ENCODE measurements at regions of chr11 and their contacts with region 1.

Region 1: DNA sequence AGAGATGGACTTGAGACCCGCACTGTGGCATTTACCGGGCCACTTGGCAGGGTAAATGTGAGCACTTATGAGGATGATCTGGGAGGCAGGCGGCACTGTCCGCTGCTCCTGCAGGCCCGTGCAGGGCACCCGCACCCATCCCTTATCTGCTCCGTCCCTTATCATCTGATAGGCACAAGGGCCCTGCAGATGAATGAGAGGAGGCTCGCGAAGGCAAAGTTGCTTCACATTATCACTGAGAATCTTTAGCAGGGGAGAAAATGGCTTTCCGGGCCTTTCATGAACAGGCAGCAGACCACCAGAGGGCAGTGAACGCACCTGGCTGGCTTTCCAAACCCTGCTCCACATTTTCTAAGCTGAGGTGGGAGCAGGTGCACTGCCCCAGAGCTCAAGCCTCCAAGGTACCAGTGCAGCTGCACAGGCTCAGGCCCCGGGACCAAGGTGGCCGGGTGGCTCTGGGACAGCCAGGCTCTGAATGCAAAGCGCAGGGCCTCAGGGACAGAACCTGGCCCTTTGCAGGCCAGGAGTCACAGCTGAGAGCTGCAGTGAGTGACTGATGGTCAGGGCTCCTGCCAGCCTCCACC is 165.6 kb downstream of the SHANK2 start:
- DNase-seq: peak; percentile 42
- H3K4me3 Mint-ChIP-seq: no peak overlapping the region
- H3K27ac Mint-ChIP-seq: no peak overlapping the region
- H3K4me1 Mint-ChIP-seq: no peaks in the 10 kb centered on the region
- H3K27me3 Mint-ChIP-seq: no peaks in the 10 kb centered on the region
- CTCF ChIP-seq: peak; percentile 41

Region 2: GRCh38 chr11:70885821-70886231 is 200.9 kb before region 1 on chr11:
- CTCF ChIA-PET with region 1: no interaction called
- intact Hi-C with region 1: no loop called
- DNase-seq: no peak
- H3K4me3 Mint-ChIP-seq: no peak overlapping the region
- H3K27ac Mint-ChIP-seq: no peak overlapping the region
- H3K4me1 Mint-ChIP-seq: no peaks in the 10 kb centered on the region
- H3K27me3 Mint-ChIP-seq: no peaks in the 10 kb centered on the region
- CTCF ChIP-seq: no peak

Region 3: DNA sequence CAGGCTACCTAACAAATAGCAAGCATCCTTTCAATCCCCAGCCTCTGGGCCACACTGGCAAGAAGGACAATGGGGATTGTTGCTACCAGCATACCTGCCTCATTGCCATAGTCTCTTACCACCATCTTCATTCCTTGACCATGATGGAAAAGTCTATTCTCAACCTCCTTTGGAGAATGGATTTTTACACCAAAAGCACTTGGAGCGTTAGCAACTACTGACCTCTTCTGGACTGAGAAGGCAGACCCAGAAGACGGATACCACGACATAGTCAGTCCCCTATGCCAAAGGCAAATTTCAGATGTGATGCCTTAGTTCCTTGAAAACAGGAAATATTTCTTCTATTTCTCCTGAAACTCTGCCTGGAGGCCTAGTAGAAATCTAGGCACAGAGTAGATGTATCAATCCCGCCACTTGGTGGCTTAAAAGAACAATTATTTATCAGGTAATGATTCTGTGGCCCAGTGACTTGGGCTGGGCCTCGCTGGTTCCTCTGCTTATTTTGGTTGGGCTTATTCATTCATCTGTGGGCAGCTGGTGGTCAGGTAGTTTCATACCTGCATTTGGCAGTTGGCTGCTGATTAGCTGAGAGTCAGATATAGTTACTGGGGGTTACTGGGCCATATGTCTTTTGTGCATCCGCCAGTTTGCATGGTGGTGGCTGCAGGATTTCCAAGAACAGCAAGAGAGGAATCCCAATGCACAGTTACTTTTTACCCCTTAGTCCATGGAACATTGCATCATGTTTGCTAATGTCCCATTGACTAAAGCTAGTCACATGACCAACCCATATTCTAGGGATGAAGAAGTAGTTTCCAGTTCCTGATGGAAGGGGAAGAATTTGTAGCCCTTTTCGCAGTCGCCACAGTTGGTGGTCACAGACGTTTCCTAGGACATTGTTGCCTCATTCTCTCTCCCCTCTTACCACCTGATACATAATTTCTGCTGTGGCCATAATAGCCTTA is 286.2 kb after region 1 on chr11:
- CTCF ChIA-PET with region 1: no interaction called
- intact Hi-C with region 1: loop called (anchors 1 kb)
- DNase-seq: peak; percentile 19
- H3K4me3 Mint-ChIP-seq: no peak overlapping the region
- H3K27ac Mint-ChIP-seq: no peak overlapping the region
- H3K4me1 Mint-ChIP-seq: no peaks in the 10 kb centered on the region
- H3K27me3 Mint-ChIP-seq: peaks cover 58% of the 10 kb centered on the region
- CTCF ChIP-seq: peak; percentile 23